Heart right ventricle (tissue), 16 donors: ENCODE measurements at regions of chr2 and their contacts with region 1.

Region 1: GRCh38 chr2:58842501-58843155 is 601.5 kb upstream of the FANCL start:
- DNase-seq: no peak
- ATAC-seq: no peak
- H3K4me3 ChIP-seq: no peak overlapping the region
- H3K27ac ChIP-seq: no peak overlapping the region
- H3K4me1 ChIP-seq: no peaks in the 10 kb centered on the region
- H3K27me3 ChIP-seq: no peaks in the 10 kb centered on the region
- CTCF ChIP-seq: no peak

Region 2: DNA sequence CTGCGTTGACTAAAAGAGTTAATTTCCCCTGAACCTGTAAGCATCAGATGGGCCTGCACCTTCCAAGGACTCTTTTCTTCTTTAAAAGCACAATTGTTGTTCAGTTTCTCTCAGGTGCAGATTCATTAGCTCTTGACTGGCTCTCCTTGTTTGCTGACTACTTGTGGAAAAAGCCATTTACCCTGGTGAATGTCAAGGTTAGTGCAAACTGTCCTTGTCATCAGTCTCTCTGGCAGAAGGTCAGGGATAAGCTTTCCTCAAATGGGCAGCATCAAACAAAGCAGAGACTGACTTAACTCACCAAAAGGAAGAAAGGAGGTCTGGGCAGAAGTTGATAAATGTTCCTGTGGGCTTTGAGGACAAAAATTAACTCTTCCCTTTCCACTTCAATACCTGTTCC is 788.2 kb after region 1 on chr2:
- intact Hi-C with region 1: loop called in 1 of 10 experiments (anchors 10 kb)
- DNase-seq: no peak
- ATAC-seq: peak in 1 of 8 donors; percentile 58
- H3K4me3 ChIP-seq: no peak overlapping the region
- H3K27ac ChIP-seq: no peak overlapping the region
- H3K4me1 ChIP-seq: peaks cover 0 to 10% (median 0%) of the 10 kb centered on the region in 9 donors
- H3K27me3 ChIP-seq: no peaks in the 10 kb centered on the region
- CTCF ChIP-seq: no peak